CD8-positive, alpha-beta T cell (primary cell): ENCODE measurements at regions of chr9 and their contacts with region 1.

Region 1: DNA sequence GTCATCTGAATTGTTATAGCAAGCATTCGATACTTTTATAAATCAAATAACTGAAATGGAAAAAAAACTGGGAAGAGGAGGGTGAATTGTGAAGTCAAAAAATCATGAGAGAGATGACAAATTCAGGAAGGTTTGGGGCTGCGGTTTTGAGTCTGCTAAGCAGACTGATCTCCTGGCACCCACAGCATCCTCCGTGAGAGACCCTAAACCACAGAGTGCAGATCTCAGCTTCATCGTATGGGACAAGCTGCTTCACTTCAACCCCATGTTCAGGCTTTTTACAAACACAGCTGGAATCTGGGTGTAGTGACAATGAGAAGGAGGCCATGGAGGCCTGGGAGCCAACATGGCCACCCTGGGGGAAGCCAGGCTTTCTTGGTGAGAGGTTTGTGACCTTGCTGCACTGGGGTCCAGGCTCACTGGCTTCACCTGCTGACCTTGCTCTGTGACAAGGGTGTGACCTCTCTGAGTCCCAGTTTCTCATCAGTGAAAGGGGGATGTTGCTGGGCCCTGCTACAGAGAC is 19.4 kb downstream of the USP20 start:
- DNase-seq: peak in 4 of 9 experiments; percentile 58 to 77 (median 62)
- ATAC-seq: peak; percentile 74
- H3K4me3 ChIP-seq: peak overlapping the region in 1 of 2 experiments; percentile 7
- H3K4me3 Mint-ChIP-seq: peak overlapping the region; percentile 62
- H3K27ac ChIP-seq: peak overlapping the region in 1 of 2 experiments; percentile 36
- H3K27ac Mint-ChIP-seq: peak overlapping the region; percentile 81
- H3K4me1 ChIP-seq: peaks cover 40% of the 10 kb centered on the region
- H3K4me1 Mint-ChIP-seq: peaks cover 76% of the 10 kb centered on the region
- H3K27me3 ChIP-seq: no peaks in the 10 kb centered on the region
- H3K27me3 Mint-ChIP-seq: no peaks in the 10 kb centered on the region
- CTCF ChIP-seq: no peak

Region 2: DNA sequence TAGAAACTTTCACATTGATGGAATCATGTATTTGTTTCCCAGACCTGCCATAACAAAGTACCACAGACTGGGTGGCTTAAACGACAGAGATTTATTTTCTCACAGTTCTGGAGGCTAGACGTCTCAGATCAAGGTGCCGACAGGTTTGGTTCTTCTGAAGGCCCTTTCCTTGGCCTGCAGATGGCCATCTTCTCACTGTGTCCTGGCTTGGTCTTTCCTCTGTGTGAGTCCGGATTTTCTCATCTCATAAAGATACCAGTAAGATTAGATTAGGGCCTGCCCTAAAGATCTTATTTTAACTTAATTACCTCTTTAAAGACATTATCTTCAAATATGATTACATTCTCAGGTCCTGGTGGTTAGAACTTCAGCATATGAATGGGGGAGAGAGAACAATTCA is 13.6 kb before region 1 on chr9:
- CTCF ChIA-PET with region 1: interaction called, 6 read pairs
- POLR2A ChIA-PET with region 1: interaction called, 3 read pairs
- intact Hi-C with region 1: loop called in 1 of 2 experiments (anchors 1 kb)
- DNase-seq: no peak
- ATAC-seq: no peak
- H3K4me3 ChIP-seq: no peak overlapping the region
- H3K4me3 Mint-ChIP-seq: peak overlapping the region; percentile 19
- H3K27ac ChIP-seq: no peak overlapping the region
- H3K27ac Mint-ChIP-seq: peak overlapping the region; percentile 52
- H3K4me1 ChIP-seq: peaks cover 58% of the 10 kb centered on the region
- H3K4me1 Mint-ChIP-seq: peaks cover 72% of the 10 kb centered on the region
- H3K27me3 ChIP-seq: no peaks in the 10 kb centered on the region
- H3K27me3 Mint-ChIP-seq: no peaks in the 10 kb centered on the region
- CTCF ChIP-seq: no peak

Region 3: GRCh38 chr9:129868916-129869486 is 14.4 kb after region 1 on chr9:
- CTCF ChIA-PET with region 1: interaction called, 6 read pairs
- POLR2A ChIA-PET with region 1: interaction called, 6 read pairs
- intact Hi-C with region 1: loop called in 1 of 2 experiments (anchors 1 kb)
- DNase-seq: peak; percentile 85 to 97 (median 93)
- ATAC-seq: peak; percentile 87
- H3K4me3 ChIP-seq: peak overlapping the region; percentile 19 to 51
- H3K4me3 Mint-ChIP-seq: peak overlapping the region; percentile 65
- H3K27ac ChIP-seq: peak overlapping the region; percentile 85
- H3K27ac Mint-ChIP-seq: peak overlapping the region; percentile 95
- H3K4me1 ChIP-seq: peaks cover 80% of the 10 kb centered on the region
- H3K4me1 Mint-ChIP-seq: peaks cover 76% of the 10 kb centered on the region
- H3K27me3 ChIP-seq: no peaks in the 10 kb centered on the region
- H3K27me3 Mint-ChIP-seq: no peaks in the 10 kb centered on the region
- CTCF ChIP-seq: no peak

Region 4: GRCh38 chr9:129908906-129909305 is 54.3 kb after region 1 on chr9:
- CTCF ChIA-PET with region 1: no interaction called
- POLR2A ChIA-PET with region 1: no interaction called
- intact Hi-C with region 1: no loop called
- DNase-seq: no peak
- ATAC-seq: no peak
- H3K4me3 ChIP-seq: no peak overlapping the region
- H3K4me3 Mint-ChIP-seq: no peak overlapping the region
- H3K27ac ChIP-seq: no peak overlapping the region
- H3K27ac Mint-ChIP-seq: no peak overlapping the region
- H3K4me1 ChIP-seq: no peaks in the 10 kb centered on the region
- H3K4me1 Mint-ChIP-seq: peaks cover 14% of the 10 kb centered on the region
- H3K27me3 ChIP-seq: no peaks in the 10 kb centered on the region
- H3K27me3 Mint-ChIP-seq: no peaks in the 10 kb centered on the region
- CTCF ChIP-seq: no peak

Region 5: GRCh38 chr9:129944506-129945116 is 90.0 kb after region 1 on chr9:
- CTCF ChIA-PET with region 1: no interaction called
- POLR2A ChIA-PET with region 1: no interaction called
- intact Hi-C with region 1: no loop called
- DNase-seq: peak; percentile 21 to 90 (median 45)
- ATAC-seq: peak; percentile 88
- H3K4me3 ChIP-seq: no peak overlapping the region
- H3K4me3 Mint-ChIP-seq: peak overlapping the region; percentile 9
- H3K27ac ChIP-seq: peak overlapping the region; percentile 68 to 73
- H3K27ac Mint-ChIP-seq: peak overlapping the region; percentile 83
- H3K4me1 ChIP-seq: peaks cover 55% of the 10 kb centered on the region
- H3K4me1 Mint-ChIP-seq: peaks cover 51% of the 10 kb centered on the region
- H3K27me3 ChIP-seq: no peaks in the 10 kb centered on the region
- H3K27me3 Mint-ChIP-seq: no peaks in the 10 kb centered on the region
- CTCF ChIP-seq: peak; percentile 27